AG04450 (cell line): ENCODE measurements at regions of chr3 and their contacts with region 1.

Region 1: GRCh38 chr3:73086071-73086494 is 24.6 kb downstream of the EBLN2 start:
- DNase-seq: peak; percentile 15
- H3K4me3 ChIP-seq: peak overlapping the region; percentile 23; the same call in 1 of the 2 replicates
- H3K27ac ChIP-seq: no peak overlapping the region
- H3K27me3 ChIP-seq: peaks cover 2% of the 10 kb centered on the region
- CTCF ChIP-seq: peak; percentile 73

Region 2: GRCh38 chr3:71875461-71875947 is 1210.6 kb before region 1 on chr3:
- CTCF ChIA-PET with region 1: interaction called, 21 read pairs
- POLR2A ChIA-PET with region 1: no interaction called
- DNase-seq: peak; percentile 15
- H3K4me3 ChIP-seq: no peak overlapping the region
- H3K27ac ChIP-seq: no peak overlapping the region
- H3K27me3 ChIP-seq: peaks cover 10% of the 10 kb centered on the region
- CTCF ChIP-seq: peak; percentile 93

Region 3: DNA sequence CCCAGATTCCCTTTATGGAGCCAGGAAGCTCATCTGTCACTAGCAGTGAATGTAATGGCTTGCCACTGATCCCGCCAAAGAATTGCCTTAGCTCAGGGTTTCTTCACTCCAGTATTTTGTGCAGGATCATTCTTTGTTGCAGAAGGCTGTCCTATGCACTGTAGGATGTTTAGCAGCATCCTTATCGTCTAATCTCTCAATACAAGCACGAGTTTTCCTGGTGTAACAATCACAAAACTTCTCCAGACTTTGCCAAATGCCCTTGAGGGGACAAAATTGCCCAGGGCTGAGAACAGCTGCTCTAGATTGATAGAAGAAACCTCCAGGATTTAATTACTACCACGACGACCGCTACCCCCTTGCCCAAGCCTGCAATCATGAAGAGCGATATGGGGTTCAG is 231.1 kb before region 1 on chr3:
- CTCF ChIA-PET with region 1: interaction called, 165 read pairs
- POLR2A ChIA-PET with region 1: no interaction called
- DNase-seq: no peak
- H3K4me3 ChIP-seq: no peak overlapping the region
- H3K27ac ChIP-seq: no peak overlapping the region
- H3K27me3 ChIP-seq: peaks cover 2% of the 10 kb centered on the region
- CTCF ChIP-seq: no peak

Region 4: DNA sequence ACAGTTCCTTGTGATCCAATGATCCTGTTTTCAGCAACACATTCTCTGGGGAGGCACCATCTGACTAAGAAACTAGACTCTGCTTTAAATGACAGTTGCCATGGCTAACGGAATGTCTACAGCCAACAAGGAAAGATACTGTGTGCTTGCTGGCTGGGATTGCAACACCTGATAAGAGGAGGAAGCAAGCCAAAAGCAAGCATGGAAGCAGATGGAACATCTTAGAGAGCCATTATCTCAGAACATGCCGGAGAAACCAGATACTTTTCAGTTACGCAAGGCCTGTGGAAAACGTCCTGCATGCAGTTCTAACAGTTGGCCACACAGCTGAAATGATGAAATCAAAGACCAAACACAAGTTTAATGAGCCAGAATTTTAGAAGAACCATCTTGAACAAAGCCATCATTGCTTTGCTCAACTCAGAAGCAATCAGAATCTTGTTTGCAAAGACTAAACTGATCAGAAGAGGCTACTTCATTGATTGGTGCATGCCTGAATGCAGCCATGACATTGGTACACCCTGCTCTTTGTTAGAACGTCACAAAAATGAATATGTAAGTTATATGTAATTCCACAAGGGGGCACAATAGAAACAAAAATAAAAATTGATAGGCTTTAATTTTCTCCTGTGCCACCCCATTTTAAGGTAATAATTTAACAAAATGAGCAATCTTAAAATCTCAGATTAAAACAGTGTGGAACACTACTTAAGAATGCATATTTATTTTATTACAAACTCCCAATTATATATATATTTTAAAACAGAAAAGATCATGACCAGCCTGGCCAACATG is 147.4 kb before region 1 on chr3:
- CTCF ChIA-PET with region 1: interaction called, 29 read pairs
- POLR2A ChIA-PET with region 1: no interaction called
- DNase-seq: peak; percentile 96
- H3K4me3 ChIP-seq: no peak overlapping the region
- H3K27ac ChIP-seq: peak overlapping the region; percentile 74
- H3K27me3 ChIP-seq: no peaks in the 10 kb centered on the region
- CTCF ChIP-seq: peak; percentile 59

Region 5: GRCh38 chr3:72951259-72951722 is 134.8 kb before region 1 on chr3:
- CTCF ChIA-PET with region 1: interaction called, 11 read pairs
- POLR2A ChIA-PET with region 1: no interaction called
- DNase-seq: no peak
- H3K4me3 ChIP-seq: no peak overlapping the region
- H3K27ac ChIP-seq: no peak overlapping the region
- H3K27me3 ChIP-seq: no peaks in the 10 kb centered on the region
- CTCF ChIP-seq: no peak

Region 6: DNA sequence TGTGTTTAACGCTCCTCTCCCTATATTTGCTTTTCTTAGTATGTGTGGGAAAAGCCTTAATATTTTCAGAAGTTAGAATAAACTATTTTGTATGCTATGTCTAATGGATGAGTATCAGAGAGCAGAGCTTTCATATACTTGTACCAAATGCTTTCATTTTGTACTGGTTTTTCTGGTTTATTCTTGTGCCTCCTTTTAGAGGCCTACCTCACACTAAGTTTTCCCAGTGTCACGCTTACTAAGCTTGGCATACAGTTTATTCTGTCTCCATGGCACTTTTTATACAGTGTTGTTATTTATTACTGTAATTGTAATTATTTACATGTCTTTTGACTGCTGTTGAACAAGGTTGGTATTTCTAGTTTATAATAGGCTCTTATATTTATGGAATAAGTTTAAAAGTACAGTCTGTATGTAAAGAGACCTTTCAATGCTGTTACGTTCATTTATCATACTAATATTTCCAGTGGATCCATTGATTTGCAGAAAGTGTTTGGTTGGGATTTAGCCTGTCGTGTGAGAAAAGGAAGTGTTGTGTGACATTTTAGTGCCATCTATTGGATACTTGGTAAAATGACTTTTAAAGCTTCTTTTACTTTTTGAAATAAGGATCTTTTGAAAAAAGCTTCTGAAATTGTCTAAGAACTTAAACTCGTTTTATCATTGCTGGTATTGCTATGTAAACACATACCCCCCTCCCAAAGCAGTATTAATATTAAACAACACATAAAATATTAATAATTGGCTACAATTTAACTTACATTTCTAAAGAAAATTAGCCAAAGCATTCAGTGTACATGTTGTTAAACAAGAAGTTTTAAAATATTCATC is 29.9 kb before region 1 on chr3:
- CTCF ChIA-PET with region 1: interaction called, 13 read pairs
- POLR2A ChIA-PET with region 1: interaction called, 9 read pairs
- DNase-seq: no peak
- H3K4me3 ChIP-seq: no peak overlapping the region
- H3K27ac ChIP-seq: no peak overlapping the region
- H3K27me3 ChIP-seq: no peaks in the 10 kb centered on the region
- CTCF ChIP-seq: peak; percentile 52

Region 7: DNA sequence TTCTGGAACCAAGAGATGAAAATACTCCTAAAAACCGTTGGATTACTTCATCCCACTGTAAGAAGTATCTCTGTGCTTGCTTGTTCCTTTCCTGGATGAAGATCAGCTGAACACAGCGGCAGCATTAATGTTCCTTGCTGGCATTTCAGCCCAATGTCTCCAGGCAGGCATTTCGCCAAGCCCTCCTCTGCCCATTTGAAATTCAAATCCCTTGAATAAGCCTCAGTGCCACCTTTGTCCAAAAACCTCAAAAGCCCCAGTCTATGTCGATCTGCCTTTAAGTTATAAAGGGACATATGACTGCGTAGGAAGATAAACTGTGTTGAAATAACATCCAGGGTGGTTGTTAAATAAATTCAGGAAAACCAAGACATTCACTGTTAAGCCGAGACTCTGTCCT is 695.5 kb after region 1 on chr3:
- CTCF ChIA-PET with region 1: no interaction called
- POLR2A ChIA-PET with region 1: no interaction called
- DNase-seq: no peak
- H3K4me3 ChIP-seq: no peak overlapping the region
- H3K27ac ChIP-seq: no peak overlapping the region
- H3K27me3 ChIP-seq: no peaks in the 10 kb centered on the region
- CTCF ChIP-seq: no peak